ENCODE measurements at regions of chr9 and their contacts with region 1.

Region 1: GRCh38 chr9:4750023-4750673 is 9.1 kb upstream of the AK3 start:
- DNase-seq: no peak
- ATAC-seq: peak; percentile 68
- H3K4me3 Mint-ChIP-seq: no peak overlapping the region
- H3K27ac Mint-ChIP-seq: no peak overlapping the region
- H3K4me1 Mint-ChIP-seq: no peaks in the 10 kb centered on the region; the same call in 1 of the 2 replicates
- H3K27me3 Mint-ChIP-seq: no peaks in the 10 kb centered on the region
- CTCF ChIP-seq: peak; percentile 24; the same call in 1 of the 2 replicates

Region 2: DNA sequence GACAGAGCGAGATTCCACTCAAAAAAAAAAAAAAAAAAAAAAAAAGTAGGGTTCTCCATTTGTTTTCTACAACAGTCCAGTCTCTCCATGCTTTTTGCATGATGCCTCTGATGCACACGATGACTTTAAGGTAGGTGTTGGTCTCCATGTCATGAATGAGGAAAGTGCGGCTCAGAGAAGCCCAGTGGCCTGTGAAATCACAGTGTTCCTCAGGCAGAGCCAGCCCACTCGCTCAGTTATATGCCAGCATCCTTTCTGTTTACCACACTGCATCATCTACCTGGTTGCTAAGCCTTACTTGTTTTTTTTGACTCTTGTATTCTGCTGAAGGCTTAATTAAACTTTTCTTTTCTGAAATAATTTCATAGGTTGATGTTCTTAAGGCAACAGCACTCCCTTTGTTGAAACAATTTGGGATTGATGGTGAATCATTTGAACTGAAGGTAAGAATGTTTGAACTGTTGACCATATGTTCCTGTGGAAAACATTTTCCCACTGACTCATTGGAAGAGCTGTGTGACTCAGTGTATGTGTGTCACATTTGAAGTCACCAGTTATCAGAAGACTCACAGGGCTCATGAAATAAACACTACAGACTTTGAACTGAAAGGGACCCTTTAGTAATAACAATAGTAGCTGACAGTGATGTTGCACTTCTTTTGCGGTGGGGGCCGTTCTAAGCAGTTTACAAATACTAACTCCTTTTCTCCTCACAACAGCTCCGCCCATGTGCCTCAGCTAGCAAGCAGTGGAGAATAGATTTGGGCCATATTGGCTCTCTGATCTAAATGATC is 82.8 kb after region 1 on chr9:
- CTCF ChIA-PET with region 1: no interaction called
- POLR2A ChIA-PET with region 1: no interaction called
- DNase-seq: no peak
- ATAC-seq: no peak
- H3K4me3 Mint-ChIP-seq: no peak overlapping the region
- H3K27ac Mint-ChIP-seq: peak overlapping the region; percentile 65
- H3K4me1 Mint-ChIP-seq: no peaks in the 10 kb centered on the region; the same call in 1 of the 2 replicates
- H3K27me3 Mint-ChIP-seq: no peaks in the 10 kb centered on the region
- CTCF ChIP-seq: no peak

Region 3: DNA sequence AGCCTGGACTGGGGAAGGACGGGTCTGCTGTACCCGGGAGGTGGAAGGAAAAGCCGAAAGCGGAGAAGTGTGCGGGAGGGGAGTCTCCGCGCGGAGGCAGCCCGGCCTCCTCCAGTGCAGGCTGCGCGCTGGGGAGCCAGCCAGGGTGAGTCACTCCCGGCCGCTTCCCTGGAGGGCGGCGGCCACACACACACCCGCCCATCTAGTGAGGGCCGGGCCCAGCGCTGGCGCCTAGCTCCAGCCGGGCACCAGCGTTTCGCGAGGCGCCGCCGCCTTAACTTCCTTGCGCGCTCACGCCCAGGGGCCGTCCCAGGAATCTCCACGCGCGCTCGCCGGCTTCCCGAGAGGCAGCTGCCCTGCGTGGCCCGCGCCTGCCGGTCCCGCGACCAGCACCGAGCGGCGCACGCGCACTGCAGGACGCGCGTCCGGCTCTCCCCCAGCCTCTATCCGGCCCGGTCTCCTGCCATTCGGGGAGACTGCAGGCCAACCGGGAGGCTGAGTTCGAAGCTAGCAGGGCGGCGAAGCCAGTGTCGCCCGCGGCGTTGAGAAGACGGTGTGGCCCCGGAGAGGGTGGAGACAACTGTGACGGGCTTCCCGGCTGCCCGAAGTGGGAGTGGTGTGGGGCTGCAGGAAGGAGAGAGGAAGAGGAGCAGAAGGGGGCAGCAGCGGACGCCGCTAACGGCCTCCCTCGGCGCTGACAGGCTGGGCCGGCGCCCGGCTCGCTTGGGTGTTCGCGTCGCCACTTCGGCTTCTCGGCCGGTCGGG is 234.7 kb after region 1 on chr9 and contains the start of gene JAK2:
- CTCF ChIA-PET with region 1: interaction called, 10 read pairs
- POLR2A ChIA-PET with region 1: interaction called, 3 read pairs
- DNase-seq: peak; percentile 87
- ATAC-seq: peak; percentile 86
- H3K4me3 Mint-ChIP-seq: peak within 1 kb of the TSS; percentile 92
- H3K27ac Mint-ChIP-seq: peak within 1 kb of the TSS; percentile 91
- H3K4me1 Mint-ChIP-seq: peaks cover 16% of the 10 kb centered on the region
- H3K27me3 Mint-ChIP-seq: peaks cover 15% of the 10 kb centered on the region
- CTCF ChIP-seq: no peak
- total RNA-seq, gene JAK2: 2.0 to 3.3 TPM (median 2.4 TPM) in 3 replicates

Measured in WTC11 (cell line).